GM10248 (cell line): ENCODE measurements at regions of chr12 and their contacts with region 1.

Region 1: GRCh38 chr12:111024205-111024801 is 103.9 kb upstream of the MYL2 start:
- DNase-seq: peak; percentile 78
- CTCF ChIP-seq: peak; percentile 72

Region 2: GRCh38 chr12:110957652-110958051 is 66.7 kb before region 1 on chr12:
- CTCF ChIA-PET with region 1: no interaction called
- POLR2A ChIA-PET with region 1: no interaction called
- DNase-seq: no peak
- CTCF ChIP-seq: no peak

Region 3: DNA sequence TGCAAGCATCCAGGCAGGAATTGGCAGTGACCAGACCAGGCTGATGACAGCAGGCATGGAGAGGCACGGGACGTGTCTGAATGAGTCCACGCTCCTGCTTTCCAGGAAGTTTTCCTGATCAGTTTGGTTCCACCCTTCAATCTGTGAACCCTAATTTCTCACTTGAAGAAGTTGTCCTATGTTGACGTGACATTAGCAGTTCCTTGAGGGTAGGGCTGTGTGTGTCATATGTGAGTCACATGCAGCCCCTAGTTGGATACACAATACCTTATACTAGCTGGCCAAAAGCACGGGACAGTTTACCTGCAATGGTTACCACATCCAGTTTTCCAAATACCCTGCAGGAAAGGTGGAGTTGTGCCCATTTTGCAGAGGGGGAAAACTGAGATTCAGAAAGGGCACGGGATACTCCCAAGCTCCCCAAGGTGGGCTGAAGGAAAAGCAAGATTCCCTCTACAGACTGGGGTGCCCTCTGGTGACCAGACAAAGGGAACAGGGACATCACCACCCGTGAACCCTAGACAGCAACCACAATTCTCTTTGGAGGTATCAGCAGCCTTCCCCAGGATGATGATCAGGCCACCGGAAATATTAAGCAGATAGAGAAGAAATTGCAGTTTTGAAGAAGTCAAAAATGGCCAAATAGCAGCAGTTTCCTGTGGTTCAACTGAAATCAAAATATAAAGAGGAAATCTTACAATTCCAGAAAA is 150.1 kb after region 1 on chr12:
- CTCF ChIA-PET with region 1: interaction called, 18 read pairs
- POLR2A ChIA-PET with region 1: no interaction called
- DNase-seq: peak; percentile 44
- CTCF ChIP-seq: peak; percentile 13

Region 4: DNA sequence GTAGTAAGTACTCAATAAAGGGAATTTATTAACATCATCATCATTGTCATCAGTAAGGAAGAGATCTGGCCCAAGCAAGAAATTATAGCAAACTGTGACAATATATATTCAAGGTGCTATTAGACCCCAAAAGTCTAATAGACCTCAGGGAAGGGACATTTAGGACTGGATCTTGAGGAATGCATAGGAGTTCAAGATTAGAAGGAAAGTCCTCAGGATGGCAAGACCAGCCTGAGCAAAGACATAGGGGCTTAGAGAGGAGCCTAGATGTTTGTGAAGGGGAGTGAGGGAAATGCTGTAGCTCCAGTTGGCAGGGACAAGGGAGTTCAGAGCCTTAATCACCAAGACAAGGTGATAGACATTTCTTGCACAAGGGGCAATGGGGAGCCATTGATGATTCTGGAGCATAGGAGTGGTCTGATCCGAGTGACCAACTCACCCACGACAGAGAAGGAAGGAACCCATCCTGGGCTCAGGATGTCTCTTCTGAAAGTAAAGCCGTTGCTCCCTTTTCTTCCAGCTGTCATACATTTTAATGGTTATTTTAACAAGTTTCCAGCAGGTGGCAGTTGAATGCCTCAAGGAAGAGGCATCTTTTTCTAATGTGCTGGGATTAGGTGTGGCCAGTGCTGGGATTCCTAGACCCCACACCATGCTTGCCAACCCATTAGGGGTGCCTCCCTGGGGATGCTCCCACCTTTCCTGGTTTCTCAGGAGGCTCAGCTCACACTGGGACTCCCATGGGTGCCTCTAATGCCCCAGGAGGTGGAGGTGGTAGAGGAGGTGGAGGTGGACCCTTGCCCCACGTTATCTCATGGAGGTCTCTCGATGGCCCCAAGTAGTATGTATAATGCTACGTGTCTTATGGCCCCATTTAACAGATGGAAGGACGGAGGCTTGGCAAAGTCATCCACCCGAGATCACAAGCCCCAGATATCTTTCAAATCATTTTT is 306.8 kb after region 1 on chr12:
- CTCF ChIA-PET with region 1: no interaction called
- POLR2A ChIA-PET with region 1: no interaction called
- DNase-seq: peak; percentile 59
- CTCF ChIP-seq: peak; percentile 44